ENCODE measurements at regions of chr5 and their contacts with region 1.

Region 1: GRCh38 chr5:15995341-15996052 is 184.1 kb downstream of the MARCHF11 start:
- DNase-seq: no peak
- H3K4me3 ChIP-seq: no peak overlapping the region
- CTCF ChIP-seq: peak; percentile 45

Region 2: GRCh38 chr5:15383469-15383868 is 612.0 kb before region 1 on chr5:
- CTCF ChIA-PET with region 1: interaction called, 44 read pairs
- POLR2A ChIA-PET with region 1: no interaction called
- DNase-seq: no peak
- H3K4me3 ChIP-seq: no peak overlapping the region
- CTCF ChIP-seq: peak; percentile 51

Region 3: DNA sequence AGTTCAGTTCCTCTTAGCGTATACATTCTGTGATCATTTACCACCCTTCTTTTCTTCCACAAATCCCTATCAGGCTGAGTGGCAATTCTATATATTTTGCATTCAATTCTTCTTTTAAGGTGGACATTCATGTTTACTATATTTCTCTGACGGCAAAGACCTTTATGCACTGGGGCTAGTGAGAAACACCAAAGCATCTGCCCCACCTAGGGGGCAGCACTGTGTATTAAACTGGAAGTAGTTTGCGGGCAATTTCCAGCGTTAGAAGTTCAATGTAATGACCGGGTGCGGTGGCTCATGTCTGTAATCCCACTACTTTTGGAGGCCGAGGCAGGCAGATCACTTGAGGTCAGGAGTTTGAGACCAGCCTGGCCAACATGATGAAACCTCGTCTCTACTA is 523.4 kb before region 1 on chr5:
- CTCF ChIA-PET with region 1: interaction called, 12 read pairs
- POLR2A ChIA-PET with region 1: no interaction called
- DNase-seq: no peak
- H3K4me3 ChIP-seq: no peak overlapping the region
- CTCF ChIP-seq: no peak

Region 4: GRCh38 chr5:15834596-15835245 is 160.8 kb before region 1 on chr5:
- CTCF ChIA-PET with region 1: interaction called, 16 read pairs
- POLR2A ChIA-PET with region 1: no interaction called
- DNase-seq: peak; percentile 70
- H3K4me3 ChIP-seq: no peak overlapping the region
- CTCF ChIP-seq: no peak

Region 5: GRCh38 chr5:16013334-16014065 is 18.0 kb after region 1 on chr5:
- CTCF ChIA-PET with region 1: interaction called, 24 read pairs
- POLR2A ChIA-PET with region 1: no interaction called
- DNase-seq: no peak
- H3K4me3 ChIP-seq: no peak overlapping the region
- CTCF ChIP-seq: no peak

Measured in AG04449 (cell line).